Mucosa of descending colon (tissue), 3 donors: ENCODE measurements at regions of chrX and their contacts with region 1.

Region 1: DNA sequence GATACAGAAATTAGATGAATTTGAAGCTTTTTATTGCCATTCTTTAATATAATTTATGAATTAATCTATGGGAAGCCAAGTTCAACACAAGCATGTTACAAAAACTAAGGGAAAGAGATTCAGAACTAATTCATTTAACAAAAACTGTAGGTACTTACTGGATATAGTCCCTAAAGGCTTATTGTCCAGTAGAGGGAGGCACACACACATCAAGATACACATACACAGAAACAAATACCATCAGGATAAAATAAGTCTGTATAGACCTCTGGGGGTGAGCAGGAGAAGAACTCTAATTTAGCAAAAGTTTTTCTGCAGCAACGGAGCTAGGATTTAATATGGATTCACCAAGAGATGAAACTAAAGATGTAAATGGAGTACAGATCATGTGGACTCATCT is 83.0 kb upstream of the IL13RA1 start:
- DNase-seq: peak in 1 of 3 donors; percentile 23
- ATAC-seq: peak; percentile 74
- H3K4me3 ChIP-seq: no peak overlapping the region
- H3K4me1 ChIP-seq: no peaks in the 10 kb centered on the region
- CTCF ChIP-seq: no peak

Region 2: GRCh38 chrX:118807151-118808017 is 163.0 kb after region 1 on chrX:
- intact Hi-C with region 1: loop called (anchors 10 kb)
- DNase-seq: peak in 2 of 3 donors; percentile 23 to 45
- ATAC-seq: peak; percentile 59
- H3K4me3 ChIP-seq: no peak overlapping the region
- H3K4me1 ChIP-seq: no peaks in the 10 kb centered on the region
- CTCF ChIP-seq: no peak